Adrenal gland (tissue), 19 donors: ENCODE measurements at regions of chr22 and their contacts with region 1.

Region 1: DNA sequence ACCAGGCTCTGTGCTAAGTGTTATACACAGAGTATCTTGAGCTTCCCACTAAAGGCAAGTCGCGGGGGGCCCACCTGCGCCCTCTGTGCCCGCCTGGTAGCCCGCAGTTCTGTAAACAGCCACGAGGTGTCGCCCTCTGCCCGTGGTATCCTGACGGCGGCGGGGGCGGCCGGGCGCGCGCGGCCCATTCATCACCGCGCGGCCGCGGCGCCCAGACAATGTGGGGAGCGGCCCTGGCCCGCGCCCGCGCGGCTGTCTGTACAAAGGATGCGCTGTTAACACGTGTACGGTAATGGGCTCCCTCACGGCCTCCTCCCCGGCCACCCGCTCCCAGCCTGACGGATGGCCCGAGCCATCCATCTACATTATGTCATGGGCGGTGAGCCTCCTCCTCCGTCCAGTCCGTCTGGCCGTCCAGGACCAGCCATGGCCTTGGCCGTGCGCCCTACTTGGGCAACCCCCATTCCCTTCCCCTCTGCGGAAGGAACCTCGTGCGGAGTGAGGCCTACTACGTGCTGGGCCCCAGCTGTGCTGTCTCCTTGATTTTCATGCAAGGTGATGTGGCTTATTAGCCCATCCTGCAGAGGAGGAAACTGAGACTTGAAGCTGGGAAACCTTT is 99.4 kb downstream of the MIAT start:
- DNase-seq: peak; percentile 47 to 75 (median 70)
- H3K4me3 ChIP-seq: peak overlapping the region in 1 of 4 donors; percentile 30
- H3K27ac ChIP-seq: no peak overlapping the region
- H3K4me1 ChIP-seq: no peaks in the 10 kb centered on the region
- H3K27me3 ChIP-seq: no peaks in the 10 kb centered on the region
- CTCF ChIP-seq: peak; percentile 54 to 98 (median 86)
- POLR2A ChIP-seq: no peak

Region 2: GRCh38 chr22:26679003-26679629 is 77.7 kb before region 1 on chr22:
- intact Hi-C with region 1: no loop called
- DNase-seq: peak; percentile 64 to 93 (median 80)
- H3K4me3 ChIP-seq: no peak overlapping the region
- H3K27ac ChIP-seq: no peak overlapping the region
- H3K4me1 ChIP-seq: peaks cover 6 to 9% of the 10 kb centered on the region in 2 donors
- H3K27me3 ChIP-seq: no peaks in the 10 kb centered on the region
- CTCF ChIP-seq: peak; percentile 78 to 95 (median 88)
- POLR2A ChIP-seq: no peak

Region 3: GRCh38 chr22:27405672-27406388 is 649.0 kb after region 1 on chr22:
- intact Hi-C with region 1: loop called in 1 of 2 experiments (anchors 5 kb)
- DNase-seq: peak; percentile 27 to 72 (median 57)
- H3K4me3 ChIP-seq: no peak overlapping the region
- H3K27ac ChIP-seq: no peak overlapping the region
- H3K4me1 ChIP-seq: no peaks in the 10 kb centered on the region
- H3K27me3 ChIP-seq: peaks cover 12% of the 10 kb centered on the region
- CTCF ChIP-seq: peak; percentile 60 to 73 (median 68)
- POLR2A ChIP-seq: no peak

Region 4: GRCh38 chr22:27804470-27805297 is 1047.9 kb after region 1 on chr22:
- intact Hi-C with region 1: loop called in 1 of 2 experiments (anchors 5 kb)
- DNase-seq: peak; percentile 64 to 79 (median 75)
- H3K4me3 ChIP-seq: no peak overlapping the region
- H3K27ac ChIP-seq: no peak overlapping the region
- H3K4me1 ChIP-seq: peaks cover 0 to 21% of the 10 kb centered on the region in 2 donors
- H3K27me3 ChIP-seq: peaks cover 13% of the 10 kb centered on the region
- CTCF ChIP-seq: peak; percentile 35 to 73 (median 68)
- POLR2A ChIP-seq: no peak